Activated B cell treated with CpG ODN at 0.5 μM for 24 hours (primary cell): ENCODE measurements at regions of chr1 and their contacts with region 1.

Region 1: DNA sequence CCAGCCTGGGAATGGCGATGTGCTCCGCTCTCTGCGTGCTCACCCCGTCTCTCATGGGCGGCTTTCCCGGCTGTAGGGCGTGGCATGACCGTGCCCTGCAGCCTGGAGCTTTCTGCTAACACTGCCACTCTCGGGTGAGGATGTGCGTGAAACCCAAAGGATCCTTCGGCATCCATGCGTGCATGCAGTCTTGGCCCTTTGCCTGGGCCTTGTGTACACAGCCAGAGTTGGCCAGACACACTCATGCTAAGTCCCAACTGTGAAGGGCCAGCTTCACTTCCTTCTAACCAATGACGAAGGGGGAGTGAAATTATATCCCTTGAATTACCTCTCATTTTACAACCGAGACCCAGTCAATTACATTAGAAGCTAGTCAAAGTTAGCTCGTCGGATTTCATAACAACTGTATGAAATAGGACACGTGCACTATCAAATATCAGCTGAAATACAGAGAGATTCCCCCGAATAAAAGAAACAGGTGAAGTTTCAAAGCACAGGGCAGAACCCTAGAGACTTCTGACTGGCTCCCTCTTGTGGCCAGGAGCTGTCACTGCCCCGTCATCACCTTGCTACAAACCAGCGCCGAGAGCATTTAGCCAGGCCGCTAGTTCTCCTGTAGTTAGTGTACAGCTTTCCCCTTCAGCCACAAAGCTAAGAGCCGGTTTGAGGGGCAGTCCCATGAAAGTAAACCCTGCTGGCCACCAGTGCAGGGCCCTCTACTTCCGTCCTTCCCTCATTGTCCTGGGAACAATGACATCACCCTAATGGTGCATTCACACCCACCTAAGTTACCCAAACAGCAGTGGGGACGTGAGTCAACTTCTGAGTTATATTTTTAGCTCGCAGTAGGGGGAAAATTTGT is 63.4 kb upstream of the COA6 start:
- DNase-seq: peak; percentile 32
- ATAC-seq: peak; percentile 87
- H3K4me3 Mint-ChIP-seq: peak overlapping the region; percentile 2
- H3K27ac Mint-ChIP-seq: no peak overlapping the region
- H3K4me1 Mint-ChIP-seq: peaks cover 7% of the 10 kb centered on the region
- H3K27me3 Mint-ChIP-seq: peaks cover 14% of the 10 kb centered on the region
- CTCF ChIP-seq: peak; percentile 78

Region 2: DNA sequence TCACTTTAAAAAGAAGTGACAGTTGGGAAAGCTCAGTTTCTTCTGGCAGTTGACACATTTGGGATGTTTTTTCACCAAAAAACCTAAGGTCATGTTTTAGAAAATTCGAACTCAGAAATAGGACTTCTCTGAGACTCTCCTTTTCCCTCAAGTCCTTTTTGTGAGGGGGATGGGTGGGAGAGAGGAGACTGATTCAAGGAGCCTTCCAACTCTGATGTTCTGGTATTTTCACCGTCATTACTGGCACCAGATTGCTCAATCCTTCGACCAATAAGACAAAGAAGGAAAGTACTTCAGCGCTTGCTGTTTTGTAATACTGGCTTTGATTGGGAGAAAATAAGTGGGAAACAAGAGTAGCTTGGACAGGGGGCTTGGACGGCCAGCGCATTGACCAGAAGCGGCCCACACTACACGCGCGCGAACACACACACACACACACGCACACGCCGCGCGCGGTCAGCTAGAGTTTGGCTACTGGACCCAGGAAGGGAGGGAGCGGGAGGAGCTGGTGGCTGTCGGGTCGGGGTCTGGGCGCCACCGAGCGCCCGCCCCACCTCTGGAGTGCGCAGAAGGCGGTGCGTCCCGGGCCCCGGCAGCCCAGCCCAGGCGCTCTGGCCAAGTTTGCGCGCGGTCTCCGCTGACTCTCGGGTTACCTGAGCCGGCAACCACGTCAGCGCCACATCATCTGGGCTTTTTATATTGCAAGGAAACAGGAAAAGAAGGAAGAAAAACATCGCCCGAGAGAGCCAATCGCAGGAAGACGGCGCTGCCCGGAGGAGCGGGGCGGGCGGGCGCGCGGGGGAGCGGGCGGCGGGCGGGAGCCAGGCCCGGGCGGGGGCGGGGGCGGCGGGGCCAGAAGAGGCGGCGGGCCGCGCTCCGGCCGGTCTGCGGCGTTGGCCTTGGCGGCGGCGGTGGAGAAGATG is 696.3 kb before region 1 on chr1 and contains the start of gene KCNK1:
- CTCF ChIA-PET with region 1: no interaction called
- POLR2A ChIA-PET with region 1: no interaction called
- intact Hi-C with region 1: no loop called
- DNase-seq: no peak
- ATAC-seq: no peak
- H3K4me3 Mint-ChIP-seq: no peak within 1 kb of the TSS
- H3K27ac Mint-ChIP-seq: no peak within 1 kb of the TSS
- H3K4me1 Mint-ChIP-seq: peaks cover 4% of the 10 kb centered on the region
- H3K27me3 Mint-ChIP-seq: peaks cover 44% of the 10 kb centered on the region
- CTCF ChIP-seq: no peak
- total RNA-seq, gene KCNK1: not detected in 2 replicates

Region 3: GRCh38 chr1:234047123-234047522 is 262.7 kb before region 1 on chr1:
- CTCF ChIA-PET with region 1: no interaction called
- POLR2A ChIA-PET with region 1: no interaction called
- intact Hi-C with region 1: no loop called
- DNase-seq: no peak
- ATAC-seq: no peak
- H3K4me3 Mint-ChIP-seq: no peak overlapping the region
- H3K27ac Mint-ChIP-seq: no peak overlapping the region
- H3K4me1 Mint-ChIP-seq: no peaks in the 10 kb centered on the region
- H3K27me3 Mint-ChIP-seq: peaks cover 2% of the 10 kb centered on the region
- CTCF ChIP-seq: no peak

Region 4: DNA sequence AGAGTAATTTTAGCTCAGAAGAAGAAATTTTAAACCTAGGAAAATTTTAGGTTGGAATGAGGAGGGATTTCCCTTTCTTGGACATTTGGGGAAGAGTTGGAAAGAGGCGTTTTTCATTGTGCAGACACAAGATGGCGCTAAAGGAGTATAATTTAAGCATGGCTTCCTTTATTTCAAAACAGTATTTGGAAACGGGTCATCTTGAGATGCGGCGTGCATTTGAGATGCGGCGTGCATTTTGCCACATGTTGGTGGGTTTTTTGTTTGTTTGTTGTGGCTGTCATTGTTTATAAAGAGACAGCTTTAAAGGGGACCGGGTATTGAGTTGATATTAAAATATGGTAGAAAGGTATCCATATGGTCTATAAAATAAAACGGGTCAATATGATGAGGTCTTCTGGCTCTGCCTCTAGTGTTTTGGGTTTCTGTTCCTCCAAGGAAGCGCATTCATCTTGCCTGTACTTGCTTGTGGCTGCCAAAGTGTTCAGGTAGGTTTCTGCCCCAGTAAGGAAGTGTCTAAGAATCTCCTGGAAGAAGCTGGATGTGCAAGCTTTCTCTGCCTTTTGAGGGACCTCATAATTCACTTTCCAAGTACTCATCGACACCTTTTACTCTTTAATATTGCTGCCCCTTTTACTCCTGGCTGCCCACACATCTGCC is 195.1 kb before region 1 on chr1:
- CTCF ChIA-PET with region 1: interaction called, 14 read pairs
- POLR2A ChIA-PET with region 1: interaction called, 4 read pairs
- intact Hi-C with region 1: loop called (anchors 1 kb)
- DNase-seq: no peak
- ATAC-seq: no peak
- H3K4me3 Mint-ChIP-seq: no peak overlapping the region
- H3K27ac Mint-ChIP-seq: no peak overlapping the region
- H3K4me1 Mint-ChIP-seq: peaks cover 4% of the 10 kb centered on the region
- H3K27me3 Mint-ChIP-seq: peaks cover 6% of the 10 kb centered on the region
- CTCF ChIP-seq: no peak

Region 5: DNA sequence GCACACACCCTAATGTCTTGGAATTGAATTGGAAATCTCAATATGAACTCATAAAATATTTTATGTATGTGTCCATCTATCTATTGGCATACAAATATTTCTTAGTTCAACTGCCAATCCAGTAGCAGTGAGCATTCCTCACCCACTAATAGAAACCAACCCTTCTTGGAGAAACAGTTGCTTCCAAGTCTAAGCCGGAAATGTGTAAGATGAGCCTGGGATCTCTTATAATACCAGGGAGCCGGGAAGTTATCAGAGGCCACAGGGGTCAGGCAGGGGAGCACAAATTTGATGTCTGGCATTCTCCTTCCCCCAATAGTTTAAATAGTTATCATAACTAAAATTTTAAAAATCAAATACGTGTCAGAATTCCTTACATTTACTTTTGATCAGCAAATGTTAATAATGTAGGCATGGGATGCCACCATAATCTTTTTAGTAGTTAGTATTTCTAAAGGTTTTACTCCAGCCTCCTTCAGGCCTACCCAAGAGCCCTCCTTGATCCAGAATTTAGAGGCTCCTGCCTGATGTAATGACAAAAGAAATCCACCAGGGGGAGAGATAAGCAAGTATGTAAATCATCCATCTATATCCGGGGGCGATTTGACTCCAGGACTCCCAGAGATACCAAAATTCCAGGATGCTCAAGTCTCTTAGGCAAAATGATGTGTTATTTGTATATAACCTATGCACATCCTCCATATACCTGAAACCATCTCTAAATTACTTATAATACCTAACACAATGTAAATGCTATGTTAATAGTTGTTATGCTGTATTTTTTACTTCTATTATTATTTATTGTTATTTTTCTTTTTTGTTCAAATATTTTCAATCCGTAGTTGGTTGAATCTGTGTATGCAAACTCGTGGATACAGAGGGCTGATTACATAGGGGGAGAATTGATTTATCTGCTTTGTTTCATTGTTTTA is 155.2 kb before region 1 on chr1:
- CTCF ChIA-PET with region 1: interaction called, 4 read pairs
- POLR2A ChIA-PET with region 1: no interaction called
- intact Hi-C with region 1: loop called (anchors 2 kb)
- DNase-seq: no peak
- ATAC-seq: no peak
- H3K4me3 Mint-ChIP-seq: no peak overlapping the region
- H3K27ac Mint-ChIP-seq: no peak overlapping the region
- H3K4me1 Mint-ChIP-seq: no peaks in the 10 kb centered on the region
- H3K27me3 Mint-ChIP-seq: peaks cover 2% of the 10 kb centered on the region
- CTCF ChIP-seq: no peak

Region 6: GRCh38 chr1:234212764-234213657 is 96.8 kb before region 1 on chr1:
- CTCF ChIA-PET with region 1: interaction called, 5 read pairs
- POLR2A ChIA-PET with region 1: no interaction called
- intact Hi-C with region 1: loop called (anchors 1 kb)
- DNase-seq: no peak
- ATAC-seq: no peak
- H3K4me3 Mint-ChIP-seq: no peak overlapping the region
- H3K27ac Mint-ChIP-seq: no peak overlapping the region
- H3K4me1 Mint-ChIP-seq: peaks cover 12% of the 10 kb centered on the region
- H3K27me3 Mint-ChIP-seq: peaks cover 42% of the 10 kb centered on the region
- CTCF ChIP-seq: no peak

Region 7: DNA sequence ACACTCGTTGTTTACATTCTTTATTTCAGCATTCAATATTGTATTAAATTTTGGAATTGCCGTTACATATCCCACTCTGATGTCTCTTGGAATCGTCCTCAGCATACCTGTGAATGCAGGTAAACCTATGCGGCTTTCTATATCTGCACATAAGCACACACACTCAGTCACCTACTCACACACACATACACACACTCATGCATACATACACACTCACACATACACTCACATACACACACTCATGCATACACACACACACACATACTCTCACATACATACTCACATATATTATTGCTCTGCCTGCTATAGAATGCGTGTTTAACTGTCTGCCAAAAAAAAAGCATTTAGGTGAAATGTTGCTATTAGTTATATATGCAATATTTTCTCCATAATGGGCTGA is 10.2 kb after region 1 on chr1:
- CTCF ChIA-PET with region 1: interaction called, 12 read pairs
- POLR2A ChIA-PET with region 1: no interaction called
- intact Hi-C with region 1: no loop called
- DNase-seq: no peak
- ATAC-seq: no peak
- H3K4me3 Mint-ChIP-seq: no peak overlapping the region
- H3K27ac Mint-ChIP-seq: no peak overlapping the region
- H3K4me1 Mint-ChIP-seq: peaks cover 19% of the 10 kb centered on the region
- H3K27me3 Mint-ChIP-seq: peaks cover 45% of the 10 kb centered on the region
- CTCF ChIP-seq: no peak